Mammary epithelial cell (primary cell): ENCODE measurements at regions of chr10 and their contacts with region 1.

Region 1: GRCh38 chr10:94232709-94233383 is 129.9 kb downstream of the NOC3L start:
- DNase-seq: no peak
- H3K4me3 ChIP-seq: no peak overlapping the region
- H3K27ac ChIP-seq: no peak overlapping the region
- H3K4me1 ChIP-seq: no peaks in the 10 kb centered on the region
- H3K27me3 ChIP-seq: no peaks in the 10 kb centered on the region
- CTCF ChIP-seq: no peak

Region 2: DNA sequence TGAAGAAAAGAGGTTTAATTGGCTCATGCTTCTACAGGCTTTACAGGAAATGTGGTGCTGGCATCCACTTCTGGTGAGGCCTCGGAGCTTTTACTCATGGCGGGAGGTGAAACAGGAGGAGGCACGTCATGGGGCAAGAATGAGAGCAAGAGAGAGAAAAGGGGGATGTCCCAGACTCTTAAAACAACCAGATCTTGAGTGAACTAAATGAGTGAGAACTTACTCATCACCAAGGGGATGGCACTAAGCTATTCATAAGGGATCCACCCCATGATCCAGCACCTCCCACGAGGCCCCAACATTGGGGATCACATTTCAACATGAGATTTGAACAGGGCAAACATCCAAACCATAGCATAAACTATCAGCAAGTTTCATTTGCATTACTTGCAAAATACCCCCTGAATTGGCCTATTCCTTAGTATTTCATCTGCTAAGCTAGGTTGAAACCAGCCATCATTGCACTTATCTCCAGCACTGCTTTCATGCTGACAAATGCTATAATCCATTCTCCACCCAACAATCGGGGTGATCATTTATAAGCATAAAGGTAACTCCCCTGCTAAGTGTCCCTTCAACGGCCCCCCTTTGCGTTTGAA is 49.1 kb before region 1 on chr10:
- CTCF ChIA-PET with region 1: no interaction called
- dilution Hi-C with region 1: no loop called
- in situ Hi-C with region 1: no loop called
- intact Hi-C with region 1: no loop called
- DNase-seq: peak; percentile 95
- H3K4me3 ChIP-seq: no peak overlapping the region
- H3K27ac ChIP-seq: peak overlapping the region; percentile 4
- H3K4me1 ChIP-seq: peaks cover 9% of the 10 kb centered on the region
- H3K27me3 ChIP-seq: no peaks in the 10 kb centered on the region
- CTCF ChIP-seq: no peak

Region 3: GRCh38 chr10:94266091-94266490 is 33.2 kb after region 1 on chr10:
- CTCF ChIA-PET with region 1: no interaction called
- dilution Hi-C with region 1: loop called (anchors 5 kb)
- in situ Hi-C with region 1: no loop called
- intact Hi-C with region 1: no loop called
- DNase-seq: no peak
- H3K4me3 ChIP-seq: no peak overlapping the region
- H3K27ac ChIP-seq: no peak overlapping the region
- H3K4me1 ChIP-seq: no peaks in the 10 kb centered on the region
- H3K27me3 ChIP-seq: no peaks in the 10 kb centered on the region
- CTCF ChIP-seq: no peak